ENCODE measurements at regions of chr15 and their contacts with region 1.

Region 1: DNA sequence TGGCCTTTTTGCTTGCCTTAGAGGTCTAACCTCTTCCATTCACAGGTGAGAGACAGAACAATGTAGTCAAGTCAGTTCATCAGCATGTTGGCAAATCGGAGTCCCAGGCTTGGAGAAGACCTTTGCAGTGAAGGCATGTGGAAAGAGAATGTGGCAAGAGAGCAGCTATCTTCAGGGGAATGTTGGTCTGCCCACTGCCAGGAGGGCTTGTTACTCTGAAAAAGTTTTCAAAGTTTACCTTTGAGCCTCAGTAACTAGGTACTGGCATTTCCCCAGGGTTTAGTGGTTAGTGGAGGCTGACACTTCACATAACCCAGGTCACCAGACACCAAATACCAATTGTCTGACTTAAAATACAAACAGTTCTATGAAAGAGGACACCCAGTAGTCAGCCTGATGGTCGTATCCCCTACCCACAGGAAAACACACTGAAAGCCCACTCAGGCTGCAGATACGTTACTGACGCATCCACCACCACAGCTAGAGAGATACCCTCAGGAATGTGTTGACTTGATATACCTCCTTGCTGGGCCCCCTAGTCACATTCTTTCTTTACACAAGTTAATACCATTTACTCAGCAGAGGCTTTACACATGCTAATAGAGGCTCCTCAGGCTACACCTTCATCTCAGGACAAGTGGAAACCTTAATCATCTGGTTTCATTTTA is 9.7 kb upstream of the ARID3B start:
- DNase-seq: peak in 1 of 2 experiments; percentile 55
- H3K4me3 ChIP-seq: peak overlapping the region in 2 of 4 experiments; percentile 5 to 40; a peak in 2 of 8 replicates
- H3K27ac ChIP-seq: peak overlapping the region; percentile 84
- H3K4me1 ChIP-seq: peaks cover 6 to 18% (median 11%) of the 10 kb centered on the region in 4 experiments
- H3K27me3 ChIP-seq: no peaks in the 10 kb centered on the region
- CTCF ChIP-seq: no peak
- EP300 ChIP-seq: peak in 1 of 2 experiments; percentile 83; a peak in 1 of 3 replicates
- POLR2A ChIP-seq: peak in 1 of 2 experiments; percentile 90; a peak in 2 of 3 replicates
- RAD21 ChIP-seq: no peak

Region 2: DNA sequence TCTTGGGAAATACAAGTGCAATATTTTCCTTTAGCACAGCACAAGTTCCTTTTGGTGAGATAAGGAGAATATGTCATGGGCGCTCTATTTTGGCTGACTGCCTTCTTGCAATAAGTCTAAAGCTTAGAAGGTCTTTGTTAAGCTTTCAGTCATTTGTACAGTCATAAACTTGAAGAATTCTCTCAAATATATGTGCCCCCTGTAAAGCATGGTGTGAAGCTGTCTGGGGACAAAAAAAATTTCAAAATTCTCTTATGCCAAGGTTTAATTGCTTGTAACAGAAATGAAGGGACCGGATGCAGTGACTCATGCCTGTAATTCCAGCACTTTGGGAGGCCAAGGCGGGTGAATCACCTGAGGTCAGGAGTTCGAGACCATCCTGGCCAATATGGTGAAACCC is 12.0 kb before region 1 on chr15:
- CTCF ChIA-PET with region 1: interaction called, 3 read pairs
- POLR2A ChIA-PET with region 1: interaction called, 11 read pairs
- DNase-seq: no peak
- H3K4me3 ChIP-seq: no peak overlapping the region
- H3K27ac ChIP-seq: no peak overlapping the region
- H3K4me1 ChIP-seq: no peaks in the 10 kb centered on the region; a peak in 1 of 7 replicates
- H3K27me3 ChIP-seq: no peaks in the 10 kb centered on the region
- CTCF ChIP-seq: no peak
- EP300 ChIP-seq: no peak
- POLR2A ChIP-seq: no peak
- RAD21 ChIP-seq: no peak

Measured in H1 (cell line).